Upper lobe of right lung (tissue), 1 donor: ENCODE measurements at regions of chr15 and their contacts with region 1.

Region 1: DNA sequence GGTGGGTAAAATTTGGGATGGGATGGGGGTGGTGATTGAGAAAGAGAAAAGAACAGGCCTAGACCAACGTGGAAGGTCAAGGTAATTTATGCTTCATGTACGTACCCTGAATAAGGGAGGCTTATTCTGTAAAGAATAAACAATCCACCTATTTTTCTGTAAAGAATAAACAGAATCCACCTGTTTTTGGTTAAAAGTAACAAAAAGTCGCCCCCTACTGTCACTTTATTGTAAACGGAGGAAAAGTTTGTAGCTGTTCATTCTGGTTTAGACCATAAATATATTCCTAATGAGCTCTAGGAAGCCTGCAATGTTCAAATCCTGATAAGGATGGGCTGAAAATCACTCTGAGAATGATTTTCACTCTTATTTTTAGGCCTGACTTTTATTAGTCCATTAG is 23.5 kb upstream of the SQOR start:
- DNase-seq: no peak
- ATAC-seq: no peak
- H3K4me3 ChIP-seq: no peak overlapping the region
- H3K27ac ChIP-seq: no peak overlapping the region
- H3K4me1 ChIP-seq: no peaks in the 10 kb centered on the region
- H3K27me3 ChIP-seq: no peaks in the 10 kb centered on the region
- CTCF ChIP-seq: peak; percentile 35

Region 2: GRCh38 chr15:45457641-45458433 is 153.5 kb before region 1 on chr15:
- intact Hi-C with region 1: loop called (anchors 5 kb)
- DNase-seq: no peak
- ATAC-seq: peak; percentile 79
- H3K4me3 ChIP-seq: peak overlapping the region; percentile 55
- H3K27ac ChIP-seq: peak overlapping the region; percentile 75
- H3K4me1 ChIP-seq: peaks cover 31% of the 10 kb centered on the region
- H3K27me3 ChIP-seq: no peaks in the 10 kb centered on the region
- CTCF ChIP-seq: peak; percentile 73

Region 3: GRCh38 chr15:45684370-45684939 is 73.2 kb after region 1 on chr15:
- intact Hi-C with region 1: no loop called
- DNase-seq: no peak
- ATAC-seq: no peak
- H3K4me3 ChIP-seq: no peak overlapping the region
- H3K27ac ChIP-seq: no peak overlapping the region
- H3K4me1 ChIP-seq: no peaks in the 10 kb centered on the region
- H3K27me3 ChIP-seq: no peaks in the 10 kb centered on the region
- CTCF ChIP-seq: no peak